ENCODE measurements at regions of chr15 and their contacts with region 1.

Region 1: GRCh38 chr15:55775316-55775715 is 32.4 kb upstream of the PRTG start:
- DNase-seq: peak; percentile 40
- H3K4me3 ChIP-seq: no peak overlapping the region
- H3K27ac ChIP-seq: peak overlapping the region in 1 of 2 experiments; percentile 24; a peak in 1 of 4 replicates
- H3K4me1 ChIP-seq: peaks cover 0 to 11% of the 10 kb centered on the region in 2 experiments; a peak in 2 of 4 replicates
- H3K27me3 ChIP-seq: no peaks in the 10 kb centered on the region
- CTCF ChIP-seq: no peak
- EP300 ChIP-seq: peak in 1 of 2 experiments; percentile 37; a peak in 1 of 4 replicates
- RAD21 ChIP-seq: no peak

Region 2: GRCh38 chr15:55742927-55743728 is 32.2 kb before region 1 on chr15 and contains the start of gene PRTG:
- CTCF ChIA-PET with region 1: interaction called, 12 read pairs
- POLR2A ChIA-PET with region 1: interaction called, 5 read pairs
- DNase-seq: peak; percentile 96
- H3K4me3 ChIP-seq: peak within 1 kb of the TSS; percentile 86 to 91
- H3K27ac ChIP-seq: peak within 1 kb of the TSS; percentile 48 to 94
- H3K4me1 ChIP-seq: peaks cover 4 to 18% of the 10 kb centered on the region in 2 experiments; a peak in 2 of 4 replicates
- H3K27me3 ChIP-seq: no peaks in the 10 kb centered on the region
- CTCF ChIP-seq: no peak
- EP300 ChIP-seq: peak; percentile 11 to 36; a peak in 2 of 4 replicates
- RAD21 ChIP-seq: 0 out of 2 replicates have a peak, but pooled peaks have one; percentile 5
- polyA plus RNA-seq, gene PRTG: 3.0 and 3.6 TPM in 2 replicates

Region 3: DNA sequence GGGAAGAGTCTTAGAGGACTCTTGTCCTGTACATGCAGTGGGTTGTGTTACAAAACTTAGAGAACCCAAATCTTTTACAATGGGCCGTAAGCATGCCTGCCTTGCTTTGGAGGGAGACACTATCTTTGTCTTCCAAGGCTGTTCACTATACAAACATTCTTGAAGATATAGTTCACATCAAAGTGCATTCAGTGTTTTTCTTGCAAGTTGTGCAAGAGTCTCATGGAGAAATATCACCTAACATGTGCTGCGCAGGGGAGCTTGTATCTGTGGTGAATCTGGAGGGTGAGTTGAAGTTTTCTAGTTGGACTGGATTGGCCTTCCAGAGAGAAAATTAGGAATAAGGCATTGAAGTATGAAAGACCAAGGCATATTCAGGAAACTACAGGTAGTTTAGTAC is 24.6 kb before region 1 on chr15:
- CTCF ChIA-PET with region 1: interaction called, 16 read pairs
- POLR2A ChIA-PET with region 1: no interaction called
- DNase-seq: no peak
- H3K4me3 ChIP-seq: no peak overlapping the region
- H3K27ac ChIP-seq: no peak overlapping the region
- H3K4me1 ChIP-seq: no peaks in the 10 kb centered on the region
- H3K27me3 ChIP-seq: no peaks in the 10 kb centered on the region
- CTCF ChIP-seq: no peak
- EP300 ChIP-seq: no peak
- RAD21 ChIP-seq: no peak

Region 4: GRCh38 chr15:55764398-55764797 is 10.9 kb before region 1 on chr15:
- CTCF ChIA-PET with region 1: interaction called, 16 read pairs
- POLR2A ChIA-PET with region 1: no interaction called
- DNase-seq: no peak
- H3K4me3 ChIP-seq: no peak overlapping the region
- H3K27ac ChIP-seq: no peak overlapping the region
- H3K4me1 ChIP-seq: peaks cover 0 to 4% of the 10 kb centered on the region in 2 experiments; a peak in 1 of 4 replicates
- H3K27me3 ChIP-seq: no peaks in the 10 kb centered on the region
- CTCF ChIP-seq: no peak
- EP300 ChIP-seq: no peak
- RAD21 ChIP-seq: no peak

Measured in SK-N-SH (cell line).